ENCODE measurements at regions of chr7 and their contacts with region 1.

Region 1: DNA sequence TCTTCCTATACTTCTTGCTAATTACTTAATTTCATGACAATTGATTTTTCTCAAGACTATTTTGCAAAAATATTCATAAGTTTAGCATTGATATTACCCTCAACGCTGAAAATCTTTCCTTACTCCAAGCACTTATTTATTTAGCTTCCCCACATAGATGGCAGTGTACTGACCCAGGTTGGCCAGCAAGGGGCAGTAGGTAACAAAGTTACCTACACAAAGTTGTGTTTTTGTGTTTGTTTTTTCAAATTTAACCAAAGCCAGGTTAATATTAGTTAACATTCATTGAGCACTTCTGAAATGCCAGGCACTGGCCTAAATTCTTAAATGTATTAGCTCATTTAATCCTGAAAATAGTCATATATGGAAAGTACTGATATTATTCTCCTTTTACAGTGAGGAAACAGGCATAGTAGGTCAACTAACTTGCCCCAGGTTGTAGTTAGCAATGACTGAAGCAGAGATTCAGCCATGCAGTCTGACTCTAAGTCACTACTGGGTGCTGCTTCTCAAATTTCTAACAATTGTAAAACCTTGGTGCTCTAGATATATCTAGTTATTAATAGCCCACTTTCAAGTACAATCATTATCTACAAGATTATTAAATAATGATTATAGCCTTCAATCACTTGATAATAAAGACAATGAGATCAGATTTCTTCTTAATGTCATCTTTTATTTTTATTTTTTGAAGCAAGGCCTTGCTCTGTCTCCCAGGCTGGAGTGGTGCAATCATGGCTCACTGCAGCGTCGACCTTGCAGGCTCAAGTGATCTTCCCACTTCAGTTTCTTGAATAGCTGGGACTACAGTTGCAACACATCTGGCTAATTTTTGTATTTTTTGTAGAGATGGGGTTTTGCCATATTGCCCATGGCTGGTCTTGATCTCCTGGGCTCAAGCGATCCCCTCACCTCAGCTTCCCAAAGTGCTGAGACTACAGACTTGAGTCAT is 5.8 kb upstream of the GGCT start:
- DNase-seq: no peak
- H3K4me3 ChIP-seq: no peak overlapping the region
- H3K27ac ChIP-seq: no peak overlapping the region
- H3K27me3 ChIP-seq: no peaks in the 10 kb centered on the region
- CTCF ChIP-seq: peak; percentile 82

Region 2: DNA sequence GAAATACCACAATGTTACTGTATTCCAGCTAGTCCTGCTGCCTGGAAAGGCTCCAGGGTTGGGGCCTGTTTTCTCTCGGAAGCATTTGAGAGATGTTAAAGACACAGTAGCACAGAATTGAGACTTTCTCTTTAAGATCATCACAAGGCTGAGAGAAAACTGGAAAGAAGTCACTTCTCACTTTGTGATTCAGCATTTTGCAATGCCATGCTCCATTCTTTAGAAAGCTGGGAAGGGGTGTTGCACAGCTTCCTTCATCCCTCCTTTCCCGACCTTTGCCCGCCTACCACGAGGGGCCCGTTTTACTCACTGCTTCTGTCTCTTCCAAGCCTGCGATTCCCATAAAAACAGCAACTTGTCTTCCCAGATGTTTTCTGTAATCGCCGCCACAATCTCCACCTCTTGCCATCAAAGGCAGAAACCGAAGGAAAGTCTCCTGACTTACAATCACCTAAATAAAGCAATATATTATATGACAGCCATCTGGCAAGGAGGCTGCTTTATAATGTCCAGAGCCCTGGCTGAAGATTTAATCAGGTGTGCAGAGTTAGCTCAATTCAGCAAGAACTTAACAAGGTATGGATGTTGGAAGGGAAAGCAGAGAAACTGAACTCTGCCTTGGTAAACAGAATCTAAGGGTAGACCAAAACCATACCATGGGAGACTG is 50.7 kb before region 1 on chr7:
- CTCF ChIA-PET with region 1: interaction called, 10 read pairs
- POLR2A ChIA-PET with region 1: no interaction called
- DNase-seq: peak; percentile 85
- H3K4me3 ChIP-seq: peak overlapping the region; percentile 26
- H3K27ac ChIP-seq: peak overlapping the region; percentile 95
- H3K27me3 ChIP-seq: no peaks in the 10 kb centered on the region
- CTCF ChIP-seq: no peak

Region 3: GRCh38 chr7:30521532-30521931 is 11.1 kb after region 1 on chr7:
- CTCF ChIA-PET with region 1: interaction called, 24 read pairs
- POLR2A ChIA-PET with region 1: no interaction called
- DNase-seq: no peak
- H3K4me3 ChIP-seq: no peak overlapping the region
- H3K27ac ChIP-seq: no peak overlapping the region
- H3K27me3 ChIP-seq: no peaks in the 10 kb centered on the region
- CTCF ChIP-seq: no peak

Region 4: DNA sequence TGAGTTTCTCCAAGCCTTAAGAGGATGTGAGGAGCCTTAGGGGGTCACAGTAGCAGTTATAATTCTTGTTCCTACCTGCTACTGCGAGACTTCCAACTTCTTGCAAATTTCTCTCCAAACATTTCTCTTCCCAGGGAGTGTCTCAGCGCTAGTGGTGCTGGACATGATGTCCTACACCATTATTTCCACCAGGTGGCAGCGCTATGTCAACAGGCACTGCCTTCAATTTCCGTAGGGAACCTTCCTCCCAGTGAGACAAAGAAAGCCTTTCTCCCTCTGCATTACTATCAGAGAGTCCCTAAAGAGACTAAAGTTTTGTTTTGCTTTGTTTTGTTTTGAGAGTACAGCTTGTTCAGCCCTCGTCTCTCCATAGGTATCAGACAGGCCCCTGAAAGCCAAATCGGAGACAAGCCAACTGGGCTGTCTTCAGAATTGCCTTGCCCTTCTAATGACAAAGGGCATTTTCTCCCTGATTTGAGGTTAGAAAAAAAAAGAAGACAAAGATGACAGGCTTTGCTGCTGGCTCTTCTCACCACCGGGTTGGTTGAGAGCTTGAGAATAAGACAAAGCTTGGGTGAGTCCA is 38.5 kb after region 1 on chr7:
- CTCF ChIA-PET with region 1: interaction called, 27 read pairs
- POLR2A ChIA-PET with region 1: no interaction called
- DNase-seq: peak; percentile 36
- H3K4me3 ChIP-seq: no peak overlapping the region
- H3K27ac ChIP-seq: no peak overlapping the region
- H3K27me3 ChIP-seq: no peaks in the 10 kb centered on the region
- CTCF ChIP-seq: peak; percentile 83

Measured in AG04450 (cell line).